ENCODE measurements at regions of chr4 and their contacts with region 1.

Region 1: DNA sequence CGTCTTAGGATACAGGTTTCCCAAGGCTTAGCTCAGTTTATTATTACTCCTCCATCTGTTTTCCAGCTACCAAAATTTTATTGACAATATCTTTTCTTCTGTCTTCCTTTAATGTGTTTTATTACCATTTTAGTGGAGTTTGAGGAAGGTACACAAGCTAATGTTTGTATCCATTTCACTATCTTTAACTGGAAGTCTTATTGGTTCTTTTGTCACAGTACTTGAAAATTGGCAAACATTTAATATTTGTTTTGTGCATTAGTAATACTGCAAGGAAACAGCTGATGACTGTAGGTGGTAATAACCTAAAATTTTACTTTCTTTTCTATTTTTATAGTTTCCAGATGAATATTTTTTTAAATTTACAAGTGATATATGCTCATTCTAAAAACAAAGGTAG is 9.3 kb upstream of the ARL9 start:
- DNase-seq: peak; percentile 59
- ATAC-seq: peak; percentile 92
- H3K4me3 ChIP-seq: no peak overlapping the region
- H3K27ac ChIP-seq: 0 out of 2 replicates have a peak overlapping the region, but pooled peaks have one; percentile 5
- H3K4me1 ChIP-seq: peaks cover 12% of the 10 kb centered on the region
- H3K27me3 ChIP-seq: no peaks in the 10 kb centered on the region
- CTCF ChIP-seq: no peak

Region 2: DNA sequence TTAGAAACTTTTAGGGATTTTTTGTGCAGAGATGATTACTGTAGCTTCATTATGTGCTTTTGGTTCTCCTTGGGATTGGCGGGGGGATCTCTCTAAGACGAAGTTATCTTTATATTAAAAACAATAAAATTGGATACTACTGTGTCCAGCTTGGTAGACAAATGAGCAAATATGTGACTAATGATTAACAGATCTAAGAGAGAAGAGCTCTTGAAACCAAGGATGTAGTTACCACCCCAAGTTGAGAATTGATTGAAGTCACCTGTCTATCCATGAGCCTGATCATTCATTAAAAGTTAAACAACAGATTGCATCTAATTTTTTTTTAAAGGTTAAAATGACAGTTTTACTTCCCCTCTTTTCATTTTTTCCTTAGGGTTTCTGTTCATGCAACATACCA is 51.5 kb before region 1 on chr4:
- CTCF ChIA-PET with region 1: no interaction called
- POLR2A ChIA-PET with region 1: no interaction called
- intact Hi-C with region 1: loop called (anchors 5 kb)
- DNase-seq: no peak
- ATAC-seq: no peak
- H3K4me3 ChIP-seq: no peak overlapping the region
- H3K27ac ChIP-seq: no peak overlapping the region
- H3K4me1 ChIP-seq: peaks cover 24% of the 10 kb centered on the region
- H3K27me3 ChIP-seq: no peaks in the 10 kb centered on the region
- CTCF ChIP-seq: no peak

Measured in PC-3 (cell line).